ENCODE measurements at regions of chr10 and their contacts with region 1.

Region 1: GRCh38 chr10:5014936-5015335 is 11.3 kb upstream of the AKR1C2 start:
- DNase-seq: peak in 3 of 7 donors; percentile 13 to 33 (median 28)
- H3K4me3 ChIP-seq: no peak overlapping the region
- H3K27ac ChIP-seq: no peak overlapping the region
- H3K4me1 ChIP-seq: peaks cover 7 to 9% of the 10 kb centered on the region in 2 donors
- H3K27me3 ChIP-seq: no peaks in the 10 kb centered on the region
- CTCF ChIP-seq: peak in 5 of 6 experiments; percentile 24 to 42 (median 37)
- POLR2A ChIP-seq: no peak

Region 2: DNA sequence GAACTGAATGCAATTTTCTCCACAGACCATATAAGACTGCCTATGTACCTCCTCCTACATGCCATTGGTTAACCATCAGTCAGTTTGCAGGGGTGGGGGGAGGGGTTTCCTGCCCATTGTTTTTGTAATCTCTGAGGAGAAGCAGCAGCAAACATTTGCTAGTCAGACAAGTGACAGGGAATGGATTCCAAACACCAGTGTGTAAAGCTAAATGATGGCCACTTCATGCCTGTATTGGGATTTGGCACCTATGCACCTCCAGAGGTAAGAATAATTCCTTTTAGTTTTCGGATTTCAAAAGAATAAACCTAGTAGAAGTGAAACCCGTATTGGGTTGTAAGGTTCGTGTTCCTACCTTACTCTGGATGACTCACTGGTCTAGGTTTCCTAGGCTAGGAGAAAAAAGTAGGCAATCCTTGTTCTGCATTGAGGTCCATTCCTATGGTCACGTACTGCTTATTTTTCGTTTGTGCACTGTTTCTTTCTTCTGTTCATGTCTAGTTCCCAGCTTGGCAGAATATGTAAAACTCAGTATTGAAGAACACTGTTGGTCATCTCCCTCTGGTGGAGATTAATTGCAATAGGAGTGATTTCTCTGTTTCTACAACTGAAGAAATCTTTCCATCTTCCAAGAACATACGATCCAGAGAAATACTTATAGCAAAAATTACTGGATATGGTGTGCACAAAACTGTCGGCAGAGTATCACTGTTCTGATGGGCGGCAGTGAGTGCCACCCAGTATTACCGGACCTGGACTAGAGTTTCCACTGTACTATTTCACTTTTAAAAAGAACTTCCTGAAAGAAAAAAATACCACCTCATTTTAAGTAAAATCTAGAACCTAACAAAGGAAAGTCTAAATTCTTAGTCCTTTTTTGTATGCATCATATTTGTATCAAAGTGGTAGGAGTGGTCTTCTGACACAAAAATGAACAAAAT is 79.6 kb after region 1 on chr10 and contains the start of gene AKR1C3:
- intact Hi-C with region 1: loop called (anchors 10 kb)
- DNase-seq: no peak
- H3K4me3 ChIP-seq: peak within 1 kb of the TSS; percentile 34 to 48 (median 37)
- H3K27ac ChIP-seq: peak within 1 kb of the TSS in 3 of 5 donors; percentile 55 to 63 (median 61)
- H3K4me1 ChIP-seq: peaks cover 0 to 14% of the 10 kb centered on the region in 2 donors
- H3K27me3 ChIP-seq: no peaks in the 10 kb centered on the region
- CTCF ChIP-seq: peak; percentile 38 to 93 (median 80)
- POLR2A ChIP-seq: peak in 1 of 2 donors; percentile 31
- total RNA-seq, gene AKR1C3: 0.67 to 74.8 (median 55.5) TPM

Region 3: DNA sequence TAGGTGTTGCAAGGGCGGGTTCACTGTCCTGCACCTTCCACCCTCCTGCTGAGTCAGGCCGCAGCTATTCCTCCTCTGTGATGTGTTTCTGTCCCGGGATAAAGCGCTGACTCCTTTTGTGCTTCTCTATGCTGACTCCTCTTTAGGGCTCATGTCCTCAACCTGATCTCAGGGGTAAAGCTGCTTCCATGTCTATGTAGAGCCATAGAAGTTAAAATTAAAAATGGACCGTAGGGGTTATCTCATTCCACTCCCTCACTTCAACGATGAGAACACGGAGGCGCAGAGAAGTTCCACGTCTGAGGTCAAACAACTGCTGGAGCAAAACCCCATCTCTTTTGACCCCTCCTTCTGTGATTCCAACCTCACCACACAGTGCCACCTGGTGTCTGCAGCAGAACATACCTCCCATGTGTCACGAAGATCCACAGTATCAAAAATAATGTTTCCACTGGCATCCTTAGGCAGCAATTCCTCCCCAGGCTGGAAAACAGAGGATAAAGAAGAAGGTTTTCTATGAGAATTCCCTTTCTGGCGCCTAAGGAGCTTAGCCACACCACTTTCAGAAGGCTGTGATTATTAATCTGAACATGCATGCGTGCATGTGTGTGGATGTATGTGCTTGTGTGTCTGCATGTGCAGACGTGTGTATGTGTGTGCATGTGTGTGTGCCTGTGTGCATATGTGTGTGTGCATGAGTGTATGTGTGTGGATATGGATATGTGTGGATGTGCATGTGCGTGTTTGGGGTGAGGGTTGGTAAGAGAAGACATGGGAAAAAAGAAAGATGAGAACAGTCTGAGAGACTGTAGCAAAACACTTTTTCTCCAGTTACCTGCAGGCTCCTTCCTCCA is 268.6 kb after region 1 on chr10:
- intact Hi-C with region 1: loop called in 1 of 2 experiments (anchors 10 kb)
- DNase-seq: peak; percentile 48 to 83 (median 68)
- H3K4me3 ChIP-seq: no peak overlapping the region
- H3K27ac ChIP-seq: no peak overlapping the region
- H3K4me1 ChIP-seq: no peaks in the 10 kb centered on the region
- H3K27me3 ChIP-seq: no peaks in the 10 kb centered on the region
- CTCF ChIP-seq: peak; percentile 57 to 80 (median 68)
- POLR2A ChIP-seq: no peak